Heart left ventricle (tissue), 16 donors: ENCODE measurements at regions of chr17 and their contacts with region 1.

Region 1: DNA sequence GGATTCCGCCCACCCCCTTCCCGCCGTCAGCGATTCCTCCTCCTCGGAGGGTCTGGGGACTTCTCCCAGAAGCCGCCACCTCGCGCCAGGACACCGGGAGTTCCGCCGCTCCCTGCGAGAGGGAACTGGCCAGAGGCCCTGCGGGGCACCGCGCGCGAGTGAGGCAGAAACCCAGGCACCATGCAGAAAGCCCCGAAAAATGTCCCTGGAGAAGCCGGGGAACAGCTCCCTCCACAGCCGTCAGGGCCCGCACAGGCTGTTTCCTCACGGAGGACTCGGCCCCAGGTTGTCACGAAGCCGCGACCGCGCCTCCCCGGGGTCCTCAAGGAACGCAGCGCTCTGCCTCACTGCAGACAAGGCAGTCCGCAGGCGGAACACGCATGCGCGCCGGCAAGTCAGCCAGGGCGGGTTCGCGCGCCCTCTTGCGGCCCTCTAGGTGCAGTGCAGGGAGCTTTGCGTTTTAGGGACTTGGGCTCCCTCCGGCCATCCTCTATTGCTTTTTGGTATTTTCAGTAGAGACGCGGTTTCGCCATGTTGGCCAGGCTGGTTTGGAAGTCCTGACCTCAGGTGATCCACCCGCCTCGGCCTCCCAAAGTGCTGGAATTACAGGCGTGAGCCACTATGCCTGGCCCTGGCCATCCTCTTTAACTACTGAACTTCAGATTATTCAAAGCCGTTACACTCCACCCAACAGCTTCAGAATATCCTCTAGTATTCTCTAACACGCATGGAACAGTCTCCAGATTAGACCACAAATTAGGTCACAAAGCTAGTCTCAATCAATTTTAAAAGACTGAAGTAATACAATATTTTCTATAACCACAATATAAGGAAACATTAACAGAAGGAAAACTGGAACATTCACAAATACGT is 20.3 kb upstream of the ZNF287 start:
- DNase-seq: peak; percentile 88 to 97 (median 91)
- ATAC-seq: peak; percentile 77 to 94 (median 90)
- H3K4me3 ChIP-seq: peak overlapping the region; percentile 44 to 84 (median 64)
- H3K27ac ChIP-seq: peak overlapping the region in 10 of 12 donors; percentile 35 to 80 (median 62)
- H3K4me1 ChIP-seq: peaks cover 0 to 14% (median 3%) of the 10 kb centered on the region in 12 donors
- H3K27me3 ChIP-seq: no peaks in the 10 kb centered on the region
- CTCF ChIP-seq: peak; percentile 98 to 100 (median 99)
- POLR2A ChIP-seq: peak in 1 of 2 donors; percentile 67

Region 2: GRCh38 chr17:16653209-16654041 is 64.1 kb after region 1 on chr17 and contains the start of gene ZNF624:
- intact Hi-C with region 1: loop called in 1 of 10 experiments (anchors 5 kb)
- DNase-seq: peak; percentile 94 to 98 (median 98)
- ATAC-seq: peak; percentile 97 to 99 (median 98)
- H3K4me3 ChIP-seq: peak within 1 kb of the TSS; percentile 46 to 91 (median 68)
- H3K27ac ChIP-seq: peak within 1 kb of the TSS; percentile 87 to 98 (median 94)
- H3K4me1 ChIP-seq: peaks cover 0 to 19% (median 5%) of the 10 kb centered on the region in 12 donors
- H3K27me3 ChIP-seq: no peaks in the 10 kb centered on the region
- CTCF ChIP-seq: no peak
- POLR2A ChIP-seq: peak in 1 of 2 donors; percentile 90
- total RNA-seq, gene ZNF624: 0.88 to 5.6 (median 1.8) TPM